ENCODE measurements at regions of chr11 and their contacts with region 1.

Region 1: GRCh38 chr11:65329944-65330403 is 3.7 kb upstream of the DPF2 start:
- DNase-seq: peak; percentile 70
- H3K4me3 ChIP-seq: peak overlapping the region in 1 of 2 experiments; percentile 36; a peak in 1 of 4 replicates
- H3K27ac ChIP-seq: peak overlapping the region in 1 of 2 experiments; percentile 13; a peak in 2 of 4 replicates
- H3K4me1 ChIP-seq: peaks cover 3 to 4% of the 10 kb centered on the region in 2 experiments; a peak in 3 of 4 replicates
- H3K27me3 ChIP-seq: no peaks in the 10 kb centered on the region
- CTCF ChIP-seq: peak; percentile 85
- EP300 ChIP-seq: no peak
- RAD21 ChIP-seq: peak; percentile 72

Region 2: GRCh38 chr11:65219930-65220213 is 110.1 kb before region 1 on chr11:
- CTCF ChIA-PET with region 1: interaction called, 56 read pairs
- POLR2A ChIA-PET with region 1: no interaction called
- DNase-seq: no peak
- H3K4me3 ChIP-seq: no peak overlapping the region
- H3K27ac ChIP-seq: no peak overlapping the region
- H3K4me1 ChIP-seq: peaks cover 2 to 5% of the 10 kb centered on the region in 2 experiments; a peak in 2 of 4 replicates
- H3K27me3 ChIP-seq: no peaks in the 10 kb centered on the region
- CTCF ChIP-seq: no peak
- EP300 ChIP-seq: no peak
- RAD21 ChIP-seq: no peak

Region 3: GRCh38 chr11:65241134-65241533 is 88.8 kb before region 1 on chr11:
- CTCF ChIA-PET with region 1: no interaction called
- POLR2A ChIA-PET with region 1: no interaction called
- DNase-seq: no peak
- H3K4me3 ChIP-seq: no peak overlapping the region
- H3K27ac ChIP-seq: no peak overlapping the region
- H3K4me1 ChIP-seq: no peaks in the 10 kb centered on the region
- H3K27me3 ChIP-seq: no peaks in the 10 kb centered on the region
- CTCF ChIP-seq: no peak
- EP300 ChIP-seq: no peak
- RAD21 ChIP-seq: no peak

Region 4: DNA sequence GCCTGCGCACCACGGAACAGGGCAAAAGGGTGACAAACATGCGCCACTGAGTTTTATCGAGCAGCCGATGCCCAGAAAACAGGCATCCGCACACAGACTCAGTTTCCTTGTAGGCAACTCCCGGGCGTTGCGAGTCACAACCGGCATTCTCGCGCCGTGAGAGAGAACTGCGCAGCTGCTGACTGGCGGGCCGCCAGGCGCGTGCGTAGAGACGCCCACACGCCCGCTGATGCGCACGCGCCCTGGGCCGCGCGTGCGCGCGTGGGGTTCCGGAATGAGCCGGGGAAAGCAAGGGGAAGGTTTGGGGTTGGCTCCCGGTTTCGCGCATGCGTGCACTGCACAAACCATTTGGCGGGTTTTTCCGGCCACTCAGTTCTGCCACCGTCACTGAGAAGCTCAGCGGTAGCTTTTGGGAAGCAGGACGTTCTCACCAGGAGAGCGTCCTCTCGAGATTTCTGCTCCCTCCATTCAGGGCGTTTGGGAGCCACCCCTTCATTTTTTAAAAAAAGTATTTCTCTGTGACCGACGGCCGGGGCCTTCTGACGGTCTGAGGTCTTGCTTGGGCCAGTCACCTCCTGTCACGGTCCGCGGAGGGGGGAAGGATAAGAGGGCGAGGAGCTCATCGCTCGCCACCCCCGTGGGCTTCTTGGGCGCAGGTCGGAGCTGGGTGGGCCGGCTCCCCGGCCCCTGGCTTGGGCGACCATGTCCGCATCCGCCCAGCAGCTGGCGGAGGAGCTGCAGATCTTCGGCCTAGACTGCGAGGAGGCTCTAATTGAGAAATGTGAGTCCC is 68.2 kb before region 1 on chr11 and contains the start of gene POLA2:
- CTCF ChIA-PET with region 1: interaction called, 1,118 read pairs
- POLR2A ChIA-PET with region 1: interaction called, 3 read pairs
- DNase-seq: peak; percentile 100
- H3K4me3 ChIP-seq: peak within 1 kb of the TSS; percentile 68 to 82
- H3K27ac ChIP-seq: peak within 1 kb of the TSS; percentile 65 to 84
- H3K4me1 ChIP-seq: peaks cover 0 to 12% of the 10 kb centered on the region in 2 experiments; a peak in 1 of 4 replicates
- H3K27me3 ChIP-seq: no peaks in the 10 kb centered on the region
- CTCF ChIP-seq: no peak
- EP300 ChIP-seq: no peak
- RAD21 ChIP-seq: no peak
- polyA plus RNA-seq, gene POLA2: 18.4 and 19.4 TPM in 2 replicates

Region 5: DNA sequence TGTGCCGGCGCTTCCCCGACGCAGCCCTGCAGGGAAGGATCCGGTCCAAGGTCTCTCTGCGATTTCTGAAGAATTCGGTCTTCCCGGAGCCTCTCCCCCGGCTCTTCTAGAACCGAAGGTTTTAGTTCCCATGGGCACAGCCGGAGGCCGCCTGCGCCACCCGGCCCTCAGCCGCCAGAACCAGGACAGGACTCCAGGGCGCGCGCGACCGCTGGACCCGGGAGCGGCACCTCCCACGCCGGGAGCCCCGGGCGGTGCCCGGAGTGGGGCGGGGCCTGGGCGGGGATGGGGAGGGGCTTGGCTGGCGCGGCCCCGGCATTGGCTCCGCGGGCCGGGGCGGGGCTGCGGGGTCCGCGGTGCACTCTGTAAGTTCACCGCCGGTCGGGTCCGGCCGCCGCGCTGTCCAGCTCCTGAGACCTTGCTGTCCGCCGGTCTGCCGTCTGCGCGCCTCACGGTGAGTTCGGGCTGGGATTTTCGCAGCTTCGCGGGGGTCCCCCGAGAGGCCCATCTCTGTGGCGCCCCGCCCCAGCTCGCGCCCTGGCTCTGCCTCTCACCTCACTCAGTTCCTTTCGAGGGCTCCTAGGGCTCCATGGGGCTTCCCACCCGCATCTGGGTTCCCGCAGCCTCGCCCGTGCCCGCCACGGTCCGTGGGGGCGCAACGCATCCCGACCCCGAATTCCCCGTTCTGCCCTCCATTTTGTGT is 15.3 kb before region 1 on chr11 and contains the start of gene CDC42EP2:
- CTCF ChIA-PET with region 1: interaction called, 271 read pairs
- POLR2A ChIA-PET with region 1: interaction called, 14 read pairs
- DNase-seq: peak; percentile 97
- H3K4me3 ChIP-seq: peak within 1 kb of the TSS; percentile 85 to 94
- H3K27ac ChIP-seq: peak within 1 kb of the TSS; percentile 65 to 80
- H3K4me1 ChIP-seq: peaks cover 20 to 38% of the 10 kb centered on the region in 2 experiments; a peak in 2 of 4 replicates
- H3K27me3 ChIP-seq: no peaks in the 10 kb centered on the region
- CTCF ChIP-seq: no peak
- EP300 ChIP-seq: no peak
- RAD21 ChIP-seq: no peak
- polyA plus RNA-seq, gene CDC42EP2: 5.1 and 8.1 TPM in 2 replicates

Region 6: GRCh38 chr11:65354265-65355012 is 24.5 kb after region 1 on chr11 and contains the start of gene TIGD3:
- CTCF ChIA-PET with region 1: interaction called, 13 read pairs
- POLR2A ChIA-PET with region 1: interaction called, 5 read pairs
- DNase-seq: peak; percentile 99
- H3K4me3 ChIP-seq: peak within 1 kb of the TSS; percentile 71 to 74
- H3K27ac ChIP-seq: peak within 1 kb of the TSS; percentile 34 to 83
- H3K4me1 ChIP-seq: peaks cover 0 to 20% of the 10 kb centered on the region in 2 experiments; a peak in 1 of 4 replicates
- H3K27me3 ChIP-seq: no peaks in the 10 kb centered on the region
- CTCF ChIP-seq: 0 out of 2 replicates have a peak, but pooled peaks have one; percentile 13
- EP300 ChIP-seq: no peak
- RAD21 ChIP-seq: no peak
- polyA plus RNA-seq, gene TIGD3: 0.34 and 0.41 TPM in 2 replicates

Region 7: GRCh38 chr11:65429724-65430405 is 99.9 kb after region 1 on chr11:
- CTCF ChIA-PET with region 1: no interaction called
- POLR2A ChIA-PET with region 1: no interaction called
- DNase-seq: no peak
- H3K4me3 ChIP-seq: peak overlapping the region; percentile 77 to 83
- H3K27ac ChIP-seq: peak overlapping the region; percentile 100
- H3K4me1 ChIP-seq: peaks cover 4 to 39% of the 10 kb centered on the region in 2 experiments; a peak in 2 of 4 replicates
- H3K27me3 ChIP-seq: no peaks in the 10 kb centered on the region
- CTCF ChIP-seq: no peak
- EP300 ChIP-seq: no peak
- RAD21 ChIP-seq: no peak

Region 8: GRCh38 chr11:65652511-65653231 is 322.7 kb after region 1 on chr11:
- CTCF ChIA-PET with region 1: no interaction called
- POLR2A ChIA-PET with region 1: no interaction called
- DNase-seq: peak; percentile 99
- H3K4me3 ChIP-seq: peak overlapping the region; percentile 51 to 56
- H3K27ac ChIP-seq: peak overlapping the region; percentile 92 to 98
- H3K4me1 ChIP-seq: peaks cover 11 to 24% of the 10 kb centered on the region in 2 experiments
- H3K27me3 ChIP-seq: no peaks in the 10 kb centered on the region
- CTCF ChIP-seq: no peak
- EP300 ChIP-seq: peak in 1 of 2 experiments; percentile 30; a peak in 1 of 4 replicates
- RAD21 ChIP-seq: no peak

Measured in SK-N-SH (cell line).